Activated CD4-positive, alpha-beta memory T cell treated with anti-CD3 and anti-CD28 coated beads, Interleukin-2, amount 10 ng/mL, durations not matched to agents 7 days and 5 days (primary cell): ENCODE measurements at regions of chr1 and their contacts with region 1.

Region 1: GRCh38 chr1:40862008-40862863 is at the start of gene CITED4:
- DNase-seq: peak; percentile 96
- H3K4me3 Mint-ChIP-seq: peak within 1 kb of the TSS; percentile 82
- H3K27ac Mint-ChIP-seq: peak within 1 kb of the TSS; percentile 95
- H3K4me1 Mint-ChIP-seq: peaks cover 33% of the 10 kb centered on the region
- H3K27me3 Mint-ChIP-seq: peaks cover 31% of the 10 kb centered on the region
- total RNA-seq, gene CITED4: 6.9 to 7.9 TPM

Region 2: DNA sequence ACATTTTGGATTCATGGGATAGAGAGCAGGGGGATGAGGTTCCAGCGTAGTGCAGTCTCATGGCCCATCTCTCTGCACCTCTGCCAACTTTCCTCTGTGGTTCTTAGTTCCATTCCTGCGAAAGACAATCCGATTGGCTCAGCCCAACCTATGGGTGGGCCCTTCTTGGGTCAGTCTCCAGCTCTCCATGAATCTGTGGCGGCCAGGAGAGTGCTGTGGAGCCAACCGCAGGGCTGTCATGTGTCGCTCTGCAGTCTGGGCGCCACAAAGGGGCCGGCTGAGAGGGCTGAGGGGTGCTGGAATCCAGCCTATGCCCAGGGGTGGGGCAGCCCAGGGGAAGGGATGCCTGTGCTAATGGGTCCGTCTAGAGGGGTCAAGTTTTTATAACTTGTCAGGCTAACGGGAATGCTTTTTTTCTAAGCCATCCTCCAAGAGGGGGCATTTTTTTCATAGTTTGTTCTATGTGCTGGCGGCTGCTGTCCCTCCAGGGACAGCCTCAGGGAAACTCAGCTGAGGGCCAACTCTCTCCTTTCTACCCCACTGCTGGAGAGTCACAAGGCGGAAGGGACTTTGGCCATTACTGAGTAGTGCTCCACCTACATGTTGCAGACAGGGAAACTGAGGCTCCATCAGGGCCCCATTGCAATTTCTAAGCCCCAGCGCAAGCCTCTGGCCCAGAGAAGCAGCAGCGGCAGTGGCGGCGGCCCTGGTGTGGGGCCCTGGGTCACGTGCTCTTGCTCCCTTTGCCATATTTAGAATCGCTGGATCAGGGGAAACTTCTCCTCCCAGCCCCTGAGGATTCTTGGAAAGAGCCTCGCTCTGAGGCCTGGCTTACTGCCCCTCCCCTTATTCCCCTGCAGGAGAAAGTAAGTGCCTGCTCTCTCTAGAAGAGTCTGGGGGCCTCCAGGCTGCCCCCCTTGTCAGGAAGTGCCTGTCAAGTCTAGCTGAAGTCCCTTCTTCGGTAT is 55.2 kb before region 1 on chr1:
- CTCF ChIA-PET with region 1: no interaction called
- POLR2A ChIA-PET with region 1: no interaction called
- DNase-seq: no peak
- H3K4me3 Mint-ChIP-seq: no peak overlapping the region
- H3K27ac Mint-ChIP-seq: no peak overlapping the region
- H3K4me1 Mint-ChIP-seq: peaks cover 28% of the 10 kb centered on the region
- H3K27me3 Mint-ChIP-seq: no peaks in the 10 kb centered on the region

Region 3: DNA sequence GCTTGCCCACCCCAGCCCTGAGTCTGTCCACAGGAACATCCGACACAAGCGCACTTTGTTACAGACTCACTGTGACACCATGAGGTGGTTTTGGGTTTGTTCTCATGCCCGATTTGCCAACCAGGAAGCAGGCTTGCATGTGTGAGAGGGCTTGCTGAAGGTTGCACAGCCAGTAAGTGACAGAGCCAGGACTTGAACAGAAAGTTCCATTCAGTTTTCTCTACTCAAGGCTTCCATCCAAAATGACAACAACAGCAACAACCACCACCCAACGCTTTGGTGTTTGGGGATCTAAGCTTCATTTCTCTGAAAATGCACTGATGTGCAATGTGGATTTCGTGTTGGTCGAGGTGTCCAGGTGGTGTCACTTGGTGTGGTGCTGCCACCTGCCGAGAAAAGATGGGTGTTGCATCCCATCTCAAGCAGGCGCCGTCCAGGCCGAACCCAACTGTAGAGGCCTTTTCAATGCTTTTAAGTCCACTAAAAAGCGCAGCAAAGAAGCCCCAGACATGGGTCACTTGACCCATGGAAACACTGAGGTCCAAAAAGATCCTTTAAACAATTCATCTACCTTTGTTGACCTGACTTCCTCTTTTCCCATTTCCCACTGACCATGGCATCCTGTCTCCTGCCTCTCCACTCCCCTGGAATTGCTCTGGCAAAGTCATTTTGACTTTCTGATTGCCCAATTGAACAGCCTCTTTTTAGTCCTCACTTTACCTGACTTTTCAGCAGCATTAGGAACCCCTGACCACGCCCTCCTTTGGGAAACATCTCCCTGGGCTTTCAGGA is 12.2 kb before region 1 on chr1:
- CTCF ChIA-PET with region 1: interaction called, 19 read pairs
- POLR2A ChIA-PET with region 1: interaction called, 14 read pairs
- DNase-seq: peak; percentile 82
- H3K4me3 Mint-ChIP-seq: no peak overlapping the region
- H3K27ac Mint-ChIP-seq: no peak overlapping the region
- H3K4me1 Mint-ChIP-seq: peaks cover 14% of the 10 kb centered on the region
- H3K27me3 Mint-ChIP-seq: peaks cover 5% of the 10 kb centered on the region

Region 4: GRCh38 chr1:40877698-40878097 is 15.5 kb after region 1 on chr1:
- CTCF ChIA-PET with region 1: interaction called, 6 read pairs
- POLR2A ChIA-PET with region 1: interaction called, 64 read pairs
- DNase-seq: peak; percentile 26
- H3K4me3 Mint-ChIP-seq: no peak overlapping the region
- H3K27ac Mint-ChIP-seq: no peak overlapping the region
- H3K4me1 Mint-ChIP-seq: peaks cover 52% of the 10 kb centered on the region
- H3K27me3 Mint-ChIP-seq: peaks cover 4% of the 10 kb centered on the region

Region 5: DNA sequence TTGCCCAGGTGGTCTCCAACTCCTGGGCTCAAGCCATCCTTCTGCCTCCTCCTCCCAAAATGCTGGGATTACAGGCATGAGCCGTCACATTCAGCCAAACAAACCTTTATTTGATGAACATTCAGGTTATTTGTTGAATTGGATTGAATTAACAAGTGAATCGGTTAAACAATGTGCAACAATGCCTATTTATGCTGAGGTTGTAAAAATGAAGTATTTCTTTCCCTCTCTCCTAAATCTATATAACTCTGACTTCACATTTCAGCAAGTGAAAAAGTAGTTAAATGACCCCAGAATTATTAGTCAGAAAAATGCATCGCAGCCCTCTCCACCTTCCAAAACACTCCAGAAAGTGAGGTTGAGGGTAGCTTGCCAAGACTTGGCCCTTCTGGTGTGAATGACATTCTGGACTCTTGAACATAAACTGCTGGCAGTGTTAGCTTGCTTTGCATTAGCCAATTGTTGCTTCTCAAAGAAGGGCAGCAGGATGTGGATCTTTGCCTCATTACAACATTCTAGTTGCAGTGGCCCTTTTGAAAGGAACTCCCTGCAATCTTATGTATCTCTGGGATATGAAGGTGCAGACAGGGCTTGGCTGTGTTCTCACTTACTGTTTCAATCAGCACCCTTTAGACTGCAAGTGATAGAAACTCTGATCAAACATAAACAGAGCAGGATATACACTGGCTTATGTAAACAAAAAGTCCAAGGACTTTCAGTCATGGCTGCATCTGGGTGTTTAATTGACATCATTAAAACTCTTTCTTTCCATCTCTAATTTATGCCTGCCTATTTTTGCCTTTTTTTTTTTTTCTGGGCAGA is 599.8 kb after region 1 on chr1:
- CTCF ChIA-PET with region 1: no interaction called
- POLR2A ChIA-PET with region 1: no interaction called
- DNase-seq: no peak
- H3K4me3 Mint-ChIP-seq: no peak overlapping the region
- H3K27ac Mint-ChIP-seq: no peak overlapping the region
- H3K4me1 Mint-ChIP-seq: no peaks in the 10 kb centered on the region
- H3K27me3 Mint-ChIP-seq: peaks cover 5% of the 10 kb centered on the region